Activated naive CD4-positive, alpha-beta T cell treated with anti-CD3 and anti-CD28 coated beads for 36 hours (primary cell): ENCODE measurements at regions of chr19 and their contacts with region 1.

Region 1: GRCh38 chr19:23273590-23274413 is 23.6 kb upstream of the ZNF724 start:
- DNase-seq: peak; percentile 96
- H3K4me3 Mint-ChIP-seq: peak overlapping the region; percentile 93
- H3K27ac Mint-ChIP-seq: peak overlapping the region; percentile 92
- H3K4me1 Mint-ChIP-seq: peaks cover 28% of the 10 kb centered on the region
- H3K27me3 Mint-ChIP-seq: no peaks in the 10 kb centered on the region

Region 2: GRCh38 chr19:22634450-22634827 is 639.4 kb before region 1 on chr19:
- CTCF ChIA-PET with region 1: no interaction called
- intact Hi-C with region 1: loop called (anchors 10 kb)
- DNase-seq: peak; percentile 7
- H3K4me3 Mint-ChIP-seq: peak overlapping the region; percentile 94
- H3K27ac Mint-ChIP-seq: peak overlapping the region; percentile 87
- H3K4me1 Mint-ChIP-seq: peaks cover 8% of the 10 kb centered on the region
- H3K27me3 Mint-ChIP-seq: no peaks in the 10 kb centered on the region

Region 3: DNA sequence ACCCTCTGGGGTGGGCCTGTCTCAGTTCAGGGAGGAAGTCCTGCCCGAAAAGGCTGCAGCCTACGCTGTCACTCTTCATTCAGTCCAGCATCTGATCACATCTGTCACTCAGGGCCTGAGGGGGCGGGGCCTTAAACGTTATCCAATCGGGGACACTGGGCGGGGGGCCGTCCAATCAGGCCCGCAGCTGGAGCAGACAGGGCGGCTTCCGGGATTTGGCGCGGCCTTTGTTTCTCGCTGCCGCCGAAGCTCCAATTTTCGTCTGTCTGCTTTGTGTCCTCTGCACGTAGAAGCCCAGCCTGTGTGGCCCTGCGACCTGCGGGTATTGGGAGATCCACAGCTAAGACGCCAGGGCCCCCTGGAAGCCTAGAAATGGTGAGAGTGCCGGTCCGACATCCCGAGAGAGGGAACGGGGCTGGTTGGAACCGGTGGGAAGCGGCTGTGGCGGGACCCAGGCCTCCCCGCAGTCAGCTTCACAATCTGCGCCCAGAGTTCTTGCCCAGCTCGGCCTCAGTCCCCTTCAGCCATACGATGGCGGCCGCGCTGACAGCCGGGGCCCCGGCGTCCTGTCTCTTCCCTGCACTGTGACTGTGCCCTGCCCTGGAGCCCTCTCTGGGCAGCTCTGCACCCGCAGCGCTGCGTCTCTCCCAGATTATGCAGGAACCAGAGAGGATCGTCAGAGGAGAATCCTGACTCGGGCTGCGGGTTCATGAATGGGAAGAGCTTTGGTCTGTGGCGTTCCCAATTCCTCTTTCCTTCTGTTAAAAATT is 156.8 kb before region 1 on chr19 and contains the start of gene ZNF730:
- CTCF ChIA-PET with region 1: no interaction called
- intact Hi-C with region 1: loop called (anchors 5 kb)
- DNase-seq: peak; percentile 64
- H3K4me3 Mint-ChIP-seq: peak within 1 kb of the TSS; percentile 73
- H3K27ac Mint-ChIP-seq: no peak within 1 kb of the TSS
- H3K4me1 Mint-ChIP-seq: peaks cover 5% of the 10 kb centered on the region
- H3K27me3 Mint-ChIP-seq: peaks cover 28% of the 10 kb centered on the region
- total RNA-seq, gene ZNF730: 0.52 to 0.81 TPM

Region 4: DNA sequence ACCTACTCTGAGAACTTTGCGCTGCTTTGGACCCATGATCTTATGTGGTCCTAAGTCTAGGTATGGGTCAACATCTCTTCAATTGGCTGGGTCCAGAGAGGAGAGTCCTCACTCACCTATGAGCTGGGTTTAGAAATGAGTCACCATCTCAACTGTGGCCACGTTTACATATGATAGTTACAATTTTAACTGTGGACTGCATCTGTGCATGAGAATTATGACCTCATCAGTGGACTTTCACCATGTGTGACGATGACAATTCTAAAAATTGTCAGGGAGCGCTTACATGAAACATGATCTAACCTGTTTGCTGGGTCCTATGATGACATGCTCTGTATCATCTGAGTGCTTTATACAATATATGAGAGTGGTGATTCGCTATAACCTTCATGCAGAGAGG is 10.9 kb before region 1 on chr19:
- CTCF ChIA-PET with region 1: no interaction called
- intact Hi-C with region 1: no loop called
- DNase-seq: no peak
- H3K4me3 Mint-ChIP-seq: no peak overlapping the region
- H3K27ac Mint-ChIP-seq: no peak overlapping the region
- H3K4me1 Mint-ChIP-seq: peaks cover 10% of the 10 kb centered on the region
- H3K27me3 Mint-ChIP-seq: no peaks in the 10 kb centered on the region

Region 5: GRCh38 chr19:23328211-23328610 is 54.4 kb after region 1 on chr19:
- CTCF ChIA-PET with region 1: no interaction called
- intact Hi-C with region 1: no loop called
- DNase-seq: no peak
- H3K4me3 Mint-ChIP-seq: no peak overlapping the region
- H3K27ac Mint-ChIP-seq: no peak overlapping the region
- H3K4me1 Mint-ChIP-seq: no peaks in the 10 kb centered on the region
- H3K27me3 Mint-ChIP-seq: no peaks in the 10 kb centered on the region

Region 6: GRCh38 chr19:23415561-23416191 is 141.9 kb after region 1 on chr19:
- CTCF ChIA-PET with region 1: no interaction called
- intact Hi-C with region 1: no loop called
- DNase-seq: peak; percentile 27
- H3K4me3 Mint-ChIP-seq: peak overlapping the region; percentile 68
- H3K27ac Mint-ChIP-seq: no peak overlapping the region
- H3K4me1 Mint-ChIP-seq: peaks cover 10% of the 10 kb centered on the region
- H3K27me3 Mint-ChIP-seq: peaks cover 25% of the 10 kb centered on the region

Region 7: DNA sequence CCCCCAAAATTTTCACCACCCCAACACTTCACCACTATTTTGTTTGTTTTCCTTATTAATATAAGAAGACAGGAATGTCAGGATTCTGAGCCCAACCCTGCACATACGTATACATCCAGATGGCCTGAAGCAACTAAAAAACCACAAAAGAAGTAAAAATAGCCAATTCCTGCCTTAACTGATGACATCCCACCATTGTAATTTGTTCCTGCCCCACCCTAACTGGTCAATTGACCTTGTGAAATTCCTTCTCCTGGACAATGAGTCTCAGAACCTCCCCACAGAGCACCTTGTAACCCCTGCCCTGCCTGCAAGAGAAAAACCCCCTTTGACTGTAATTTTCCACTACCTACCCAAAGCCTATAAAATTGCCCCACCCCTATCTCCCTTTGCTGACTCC is 280.8 kb after region 1 on chr19:
- CTCF ChIA-PET with region 1: no interaction called
- intact Hi-C with region 1: no loop called
- DNase-seq: no peak
- H3K4me3 Mint-ChIP-seq: no peak overlapping the region
- H3K27ac Mint-ChIP-seq: no peak overlapping the region
- H3K4me1 Mint-ChIP-seq: no peaks in the 10 kb centered on the region
- H3K27me3 Mint-ChIP-seq: peaks cover 1% of the 10 kb centered on the region

Region 8: DNA sequence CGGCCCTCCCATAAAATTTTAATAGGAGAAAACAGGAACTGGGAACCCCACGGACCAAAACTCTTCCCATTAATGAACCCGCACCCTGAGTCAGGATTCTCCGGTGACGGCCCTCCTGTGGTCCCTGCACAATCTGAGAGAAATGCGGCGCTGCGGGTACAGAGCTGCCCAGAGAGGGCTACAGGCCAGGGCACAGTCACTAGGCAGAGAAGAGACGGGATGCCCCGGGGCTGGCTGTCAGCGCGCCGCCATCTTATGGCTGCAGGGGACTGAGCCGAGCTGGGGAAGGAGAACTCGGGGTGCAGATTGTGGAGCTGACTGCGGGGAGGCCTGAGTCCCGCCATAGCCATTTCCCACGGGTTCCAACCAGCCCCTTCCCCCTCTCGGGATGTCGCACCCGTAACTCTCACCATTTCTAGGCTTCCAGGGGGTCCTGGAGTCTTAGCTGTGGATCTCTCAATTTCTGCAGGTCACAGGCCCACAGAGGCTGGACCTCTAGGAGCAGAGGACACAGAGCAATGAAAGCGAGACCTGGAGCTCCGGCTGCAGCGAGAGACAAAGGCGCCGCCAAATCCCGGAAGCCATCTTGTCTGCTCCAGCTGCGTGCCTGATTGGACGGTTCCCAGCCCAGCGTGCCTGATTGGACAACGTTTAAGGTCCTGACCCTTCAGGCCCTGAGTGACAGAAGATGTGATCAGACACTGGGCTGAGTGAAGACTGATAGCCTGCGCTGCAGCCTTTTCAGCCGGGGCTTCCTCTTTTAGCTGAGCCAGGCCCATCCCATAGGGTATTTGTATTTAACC is 413.0 kb after region 1 on chr19 and contains the start of gene ZNF675:
- CTCF ChIA-PET with region 1: interaction called, 3 read pairs
- intact Hi-C with region 1: loop called (anchors 2 kb)
- DNase-seq: peak; percentile 94
- H3K4me3 Mint-ChIP-seq: peak within 1 kb of the TSS; percentile 96
- H3K27ac Mint-ChIP-seq: peak within 1 kb of the TSS; percentile 97
- H3K4me1 Mint-ChIP-seq: peaks cover 44% of the 10 kb centered on the region
- H3K27me3 Mint-ChIP-seq: no peaks in the 10 kb centered on the region
- total RNA-seq, gene ZNF675: 23.8 to 25.2 TPM

Region 9: GRCh38 chr19:23914402-23915301 is 640.9 kb after region 1 on chr19 and contains the start of gene ZNF726:
- CTCF ChIA-PET with region 1: no interaction called
- intact Hi-C with region 1: loop called (anchors 2 kb)
- DNase-seq: peak; percentile 93
- H3K4me3 Mint-ChIP-seq: peak within 1 kb of the TSS; percentile 96
- H3K27ac Mint-ChIP-seq: peak within 1 kb of the TSS; percentile 91
- H3K4me1 Mint-ChIP-seq: peaks cover 11% of the 10 kb centered on the region
- H3K27me3 Mint-ChIP-seq: peaks cover under 1% of the 10 kb centered on the region
- total RNA-seq, gene ZNF726: 22.3 to 22.8 TPM